Heart left ventricle (tissue), 16 donors: ENCODE measurements at regions of chr2 and their contacts with region 1.

Region 1: DNA sequence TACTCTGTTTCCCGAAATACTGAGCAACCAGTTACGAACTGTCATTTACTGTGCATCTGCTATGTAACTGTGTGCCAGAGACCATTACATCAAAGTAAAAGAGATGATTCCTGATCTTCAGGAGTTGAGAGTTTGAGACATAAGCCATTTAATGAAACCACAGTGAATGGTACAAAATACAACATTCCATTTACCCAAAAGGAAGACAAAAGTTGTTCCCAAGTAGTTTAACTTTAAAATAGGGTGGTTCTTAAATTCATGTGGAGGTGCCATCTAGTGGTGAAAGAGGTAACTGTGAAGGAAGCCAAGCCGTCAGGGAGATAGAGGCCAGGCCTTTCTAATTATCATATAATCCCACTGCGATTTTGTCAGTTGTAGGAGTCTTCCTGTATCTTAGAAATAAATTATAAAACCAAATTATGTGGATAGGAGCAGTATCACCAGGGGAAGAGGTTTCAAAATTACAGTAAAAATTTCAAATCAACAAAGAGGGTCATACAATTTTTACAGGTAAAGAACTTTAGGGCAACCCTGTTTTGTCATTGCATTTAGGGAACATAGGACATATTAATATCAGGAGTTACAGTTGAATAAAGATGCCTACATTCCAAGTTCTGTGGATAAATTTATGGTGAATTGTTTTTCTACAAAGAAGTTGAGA is 67.7 kb downstream of the EPAS1 start:
- DNase-seq: peak in 1 of 5 donors; percentile 39
- ATAC-seq: peak; percentile 15 to 58 (median 39)
- H3K4me3 ChIP-seq: no peak overlapping the region
- H3K27ac ChIP-seq: peak overlapping the region in 3 of 12 donors; percentile 15 to 77 (median 35)
- H3K4me1 ChIP-seq: peaks cover 0 to 56% (median 18%) of the 10 kb centered on the region in 12 donors
- H3K27me3 ChIP-seq: no peaks in the 10 kb centered on the region
- CTCF ChIP-seq: peak; percentile 72 to 92 (median 87)
- POLR2A ChIP-seq: no peak

Region 2: DNA sequence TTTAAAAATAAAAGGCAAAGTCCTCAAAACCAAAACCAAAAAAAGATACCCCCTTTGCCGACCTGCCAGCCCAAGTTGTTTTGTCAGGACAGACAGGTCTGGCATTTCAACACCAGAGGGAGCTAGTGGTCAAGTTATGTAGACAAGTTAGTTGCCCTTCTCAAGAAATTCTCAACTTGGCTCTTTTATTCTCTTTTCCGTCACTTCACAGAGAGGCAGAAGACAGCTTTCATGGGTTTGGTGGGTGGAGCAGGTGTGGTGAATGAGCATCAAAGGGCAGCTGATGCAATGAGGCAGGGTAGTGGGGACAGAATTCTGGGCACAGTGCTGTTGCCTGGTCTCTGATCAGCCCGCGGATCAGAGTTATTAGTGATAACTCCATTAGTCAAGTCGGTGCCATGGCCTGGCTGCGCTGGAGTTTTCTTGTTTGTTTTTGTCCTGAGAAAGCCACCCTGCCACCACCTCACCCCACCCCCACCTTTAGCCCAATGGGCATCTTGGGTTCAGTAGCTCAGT is 371.4 kb before region 1 on chr2:
- intact Hi-C with region 1: loop called in 1 of 10 experiments (anchors 5 kb)
- DNase-seq: peak in 4 of 5 donors; percentile 42 to 67 (median 50)
- ATAC-seq: peak in 3 of 4 donors; percentile 44 to 67 (median 66)
- H3K4me3 ChIP-seq: no peak overlapping the region
- H3K27ac ChIP-seq: no peak overlapping the region
- H3K4me1 ChIP-seq: peaks cover 0 to 22% (median 14%) of the 10 kb centered on the region in 12 donors
- H3K27me3 ChIP-seq: no peaks in the 10 kb centered on the region
- CTCF ChIP-seq: peak; percentile 76 to 88 (median 83)
- POLR2A ChIP-seq: no peak

Region 3: DNA sequence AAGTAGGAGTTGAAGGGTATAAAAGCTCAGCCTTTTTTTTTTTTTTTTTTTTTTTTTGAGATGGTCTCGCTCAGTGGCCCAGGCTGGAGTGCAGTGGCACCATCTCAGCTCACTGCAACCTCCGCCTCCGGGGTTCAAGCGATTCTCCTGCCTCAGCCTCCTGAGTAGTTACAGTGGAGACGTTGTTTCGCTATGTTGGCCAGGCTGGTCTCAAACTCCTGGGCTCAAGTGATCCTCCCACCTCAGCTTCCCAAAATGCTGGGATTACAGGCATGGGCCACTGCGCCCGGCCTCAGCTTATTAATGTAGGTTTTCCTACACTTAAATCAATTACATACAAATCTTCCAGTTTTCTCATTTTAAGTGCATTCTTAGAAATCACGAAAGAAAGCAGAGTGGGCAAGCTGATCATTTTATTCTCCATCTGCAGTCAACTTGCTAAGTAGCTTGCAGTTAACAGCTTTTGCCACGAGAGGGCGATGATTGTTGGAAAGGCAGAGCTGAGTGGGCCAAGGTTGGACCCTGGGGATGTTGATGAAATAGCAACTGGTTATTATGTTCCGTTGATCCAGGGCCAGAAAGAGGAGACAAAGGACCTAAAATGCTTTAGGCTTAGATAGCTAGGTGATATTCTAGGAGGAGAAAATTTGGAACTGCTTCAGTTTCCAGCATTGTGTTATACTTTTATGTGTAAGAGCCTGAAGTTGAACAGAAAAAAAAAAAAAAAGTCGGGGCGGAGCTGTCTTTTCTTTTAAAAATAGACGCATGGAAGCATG is 302.1 kb before region 1 on chr2:
- intact Hi-C with region 1: loop called in 9 of 10 experiments (anchors 2 to 10 kb)
- DNase-seq: peak in 4 of 5 donors; percentile 84 to 91 (median 88)
- ATAC-seq: peak; percentile 63 to 84 (median 80)
- H3K4me3 ChIP-seq: peak overlapping the region in 2 of 12 donors; percentile 6 to 19
- H3K27ac ChIP-seq: peak overlapping the region in 11 of 12 donors; percentile 33 to 82 (median 69)
- H3K4me1 ChIP-seq: peaks cover 0 to 55% (median 23%) of the 10 kb centered on the region in 12 donors
- H3K27me3 ChIP-seq: no peaks in the 10 kb centered on the region
- CTCF ChIP-seq: peak; percentile 82 to 96 (median 88)
- POLR2A ChIP-seq: no peak

Region 4: DNA sequence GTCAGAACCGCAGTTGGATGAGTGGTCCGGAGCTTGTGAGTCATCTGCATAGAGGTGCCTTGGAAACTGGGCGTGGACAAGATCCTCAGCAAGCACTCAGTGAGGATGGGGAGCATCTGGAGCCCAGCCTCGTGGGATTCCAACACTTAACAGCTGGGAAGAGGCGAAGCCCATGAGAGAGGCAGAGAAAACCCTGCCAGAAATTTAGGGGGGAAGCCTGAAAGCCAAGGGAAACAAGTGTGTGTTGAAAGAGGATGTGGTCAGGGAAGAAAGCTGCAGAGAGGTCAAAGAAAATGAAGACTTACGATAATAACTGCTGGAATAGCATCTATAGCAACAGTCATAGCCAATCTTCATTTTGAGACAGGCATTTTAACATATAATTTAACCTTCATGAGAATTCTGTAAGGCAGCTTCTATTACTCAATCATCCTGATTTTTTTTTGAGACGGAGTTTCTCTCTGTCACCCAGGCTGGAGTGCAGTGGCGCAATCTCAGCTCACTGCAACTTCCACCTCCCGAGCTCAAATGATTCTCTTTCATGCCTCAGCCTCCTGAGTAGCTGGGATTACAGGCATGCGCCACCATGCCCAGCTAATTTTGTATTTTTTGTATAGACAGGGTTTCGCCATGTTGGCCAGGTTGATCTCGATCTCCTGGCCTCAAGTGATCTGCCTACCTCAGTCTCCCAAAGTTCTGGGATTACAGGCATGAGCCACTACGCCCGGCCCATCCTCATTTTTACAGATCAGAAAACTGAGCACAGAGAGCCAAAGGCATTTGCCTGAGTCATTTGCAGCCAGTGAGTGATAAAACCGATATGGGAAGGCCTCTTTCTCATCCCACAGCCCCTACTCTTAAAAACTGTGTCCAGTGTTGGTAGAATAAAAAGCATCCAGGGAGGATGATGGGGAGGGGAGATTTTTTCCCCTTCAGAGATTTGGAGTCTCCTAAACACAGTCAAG is 282.1 kb before region 1 on chr2:
- intact Hi-C with region 1: loop called in 1 of 10 experiments (anchors 10 kb)
- DNase-seq: peak; percentile 75 to 89 (median 79)
- ATAC-seq: peak in 3 of 4 donors; percentile 77 to 94 (median 91)
- H3K4me3 ChIP-seq: no peak overlapping the region
- H3K27ac ChIP-seq: peak overlapping the region in 8 of 12 donors; percentile 23 to 89 (median 56)
- H3K4me1 ChIP-seq: peaks cover 0 to 44% (median 2%) of the 10 kb centered on the region in 12 donors
- H3K27me3 ChIP-seq: no peaks in the 10 kb centered on the region
- CTCF ChIP-seq: no peak
- POLR2A ChIP-seq: no peak

Region 5: GRCh38 chr2:46275973-46276372 is 89.0 kb before region 1 on chr2:
- intact Hi-C with region 1: no loop called
- DNase-seq: peak; percentile 82 to 87 (median 87)
- ATAC-seq: peak; percentile 57 to 82 (median 76)
- H3K4me3 ChIP-seq: peak overlapping the region in 3 of 12 donors; percentile 7 to 17 (median 11)
- H3K27ac ChIP-seq: peak overlapping the region in 11 of 12 donors; percentile 20 to 82 (median 73)
- H3K4me1 ChIP-seq: peaks cover 11 to 64% (median 46%) of the 10 kb centered on the region in 12 donors
- H3K27me3 ChIP-seq: no peaks in the 10 kb centered on the region
- CTCF ChIP-seq: no peak
- POLR2A ChIP-seq: no peak

Region 6: GRCh38 chr2:46306330-46306751 is 58.6 kb before region 1 on chr2:
- intact Hi-C with region 1: loop called in 2 of 10 experiments (anchors 5 kb)
- DNase-seq: no peak
- ATAC-seq: peak in 3 of 4 donors; percentile 10 to 18 (median 12)
- H3K4me3 ChIP-seq: peak overlapping the region in 3 of 12 donors; percentile 7 to 30 (median 10)
- H3K27ac ChIP-seq: peak overlapping the region; percentile 54 to 99 (median 84)
- H3K4me1 ChIP-seq: peaks cover 38 to 99% (median 89%) of the 10 kb centered on the region in 12 donors
- H3K27me3 ChIP-seq: no peaks in the 10 kb centered on the region
- CTCF ChIP-seq: no peak
- POLR2A ChIP-seq: no peak

Region 7: DNA sequence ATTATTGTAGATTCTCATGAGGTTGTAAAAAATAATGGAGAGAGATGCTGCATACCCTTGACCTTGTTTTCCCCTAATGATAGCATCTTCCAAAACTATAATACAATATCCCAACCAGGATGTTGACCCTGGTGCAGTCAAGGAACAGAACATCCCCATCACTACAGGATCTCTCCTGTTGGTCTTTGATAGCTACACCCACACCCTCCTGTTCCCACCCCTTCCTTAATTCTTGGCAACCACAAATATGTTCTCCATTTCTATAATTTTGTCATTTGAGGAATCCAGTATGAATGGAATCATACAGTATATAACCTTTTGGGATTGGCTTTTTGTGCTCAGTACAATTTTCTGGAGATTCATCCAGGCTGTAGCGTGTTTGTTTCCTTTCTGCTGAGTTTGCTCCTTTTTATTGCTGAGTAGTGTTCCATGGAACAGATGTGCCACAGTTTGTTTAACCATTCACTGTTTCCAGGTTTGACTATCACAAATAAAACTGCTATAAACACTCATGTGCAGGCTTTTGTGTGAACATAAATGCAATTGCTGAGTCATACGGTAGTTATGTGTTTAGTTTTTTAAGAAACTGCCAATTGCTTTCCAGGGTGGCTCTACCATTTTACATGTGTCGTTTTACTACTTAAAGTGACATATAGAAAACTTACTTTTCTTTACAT is 528.5 kb after region 1 on chr2:
- intact Hi-C with region 1: loop called in 1 of 10 experiments (anchors 10 kb)
- DNase-seq: no peak
- ATAC-seq: peak in 1 of 4 donors; percentile 40
- H3K4me3 ChIP-seq: no peak overlapping the region
- H3K27ac ChIP-seq: no peak overlapping the region
- H3K4me1 ChIP-seq: peaks cover 0 to 7% (median 1%) of the 10 kb centered on the region in 12 donors
- H3K27me3 ChIP-seq: no peaks in the 10 kb centered on the region
- CTCF ChIP-seq: no peak
- POLR2A ChIP-seq: no peak